ENCODE measurements at regions of chr17 and their contacts with region 1.

Region 1: GRCh38 chr17:7060165-7060891 is 16.4 kb upstream of the SLC16A11 start:
- DNase-seq: no peak
- H3K4me3 ChIP-seq: no peak overlapping the region
- H3K27ac ChIP-seq: no peak overlapping the region
- H3K4me1 ChIP-seq: no peaks in the 10 kb centered on the region
- H3K27me3 ChIP-seq: peaks cover 6% of the 10 kb centered on the region
- CTCF ChIP-seq: no peak
- EP300 ChIP-seq: no peak
- POLR2A ChIP-seq: no peak

Region 2: DNA sequence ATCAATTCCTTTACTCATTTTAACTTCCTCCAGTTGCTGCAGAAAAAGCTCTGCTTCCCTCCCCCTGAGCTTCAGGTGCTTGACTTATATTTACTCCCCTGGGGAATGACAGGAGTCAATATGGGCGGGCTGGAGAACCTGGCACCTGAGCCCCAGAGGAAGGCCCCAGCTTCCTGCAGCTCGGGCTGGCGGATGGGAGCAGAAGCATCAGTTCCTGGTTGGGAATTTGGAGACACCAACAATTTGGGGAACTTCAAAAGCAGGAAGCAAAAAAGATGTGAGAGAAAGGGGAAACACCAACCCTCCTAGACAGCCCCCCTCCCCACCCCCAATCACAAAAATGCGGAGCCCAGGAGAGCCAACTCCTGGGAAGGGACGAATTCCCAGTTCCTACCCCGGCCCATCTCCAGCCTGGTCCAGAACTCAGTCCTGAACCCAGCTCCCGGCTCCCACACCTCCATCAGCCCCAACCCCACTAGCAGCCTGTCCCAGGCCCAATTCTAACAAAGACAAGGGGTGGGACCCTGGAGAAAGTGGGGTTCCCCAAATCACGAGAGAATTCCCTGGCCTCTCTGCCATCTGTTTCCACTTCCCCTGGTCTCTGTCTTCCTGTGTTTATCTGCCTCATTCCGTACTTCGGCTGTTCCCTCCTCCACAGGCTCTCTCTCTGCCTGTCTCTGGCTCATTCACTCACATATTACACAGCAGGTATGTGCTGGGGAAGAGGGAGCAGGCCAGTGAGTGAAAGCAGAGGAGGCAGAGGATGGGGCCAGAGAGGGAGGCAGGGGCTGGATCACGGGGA is 70.5 kb after region 1 on chr17:
- in situ Hi-C with region 1: no loop called
- intact Hi-C with region 1: loop called (anchors 2 kb)
- DNase-seq: no peak
- H3K4me3 ChIP-seq: no peak overlapping the region
- H3K27ac ChIP-seq: peak overlapping the region; percentile 13 to 46 (median 31)
- H3K4me1 ChIP-seq: peaks cover 0 to 3% (median 0%) of the 10 kb centered on the region in 4 donors
- H3K27me3 ChIP-seq: peaks cover 16% of the 10 kb centered on the region
- CTCF ChIP-seq: no peak
- EP300 ChIP-seq: no peak
- POLR2A ChIP-seq: no peak

Measured in transverse colon (tissue), 4 donors.